ENCODE measurements at regions of chr12 and their contacts with region 1.

Region 1: DNA sequence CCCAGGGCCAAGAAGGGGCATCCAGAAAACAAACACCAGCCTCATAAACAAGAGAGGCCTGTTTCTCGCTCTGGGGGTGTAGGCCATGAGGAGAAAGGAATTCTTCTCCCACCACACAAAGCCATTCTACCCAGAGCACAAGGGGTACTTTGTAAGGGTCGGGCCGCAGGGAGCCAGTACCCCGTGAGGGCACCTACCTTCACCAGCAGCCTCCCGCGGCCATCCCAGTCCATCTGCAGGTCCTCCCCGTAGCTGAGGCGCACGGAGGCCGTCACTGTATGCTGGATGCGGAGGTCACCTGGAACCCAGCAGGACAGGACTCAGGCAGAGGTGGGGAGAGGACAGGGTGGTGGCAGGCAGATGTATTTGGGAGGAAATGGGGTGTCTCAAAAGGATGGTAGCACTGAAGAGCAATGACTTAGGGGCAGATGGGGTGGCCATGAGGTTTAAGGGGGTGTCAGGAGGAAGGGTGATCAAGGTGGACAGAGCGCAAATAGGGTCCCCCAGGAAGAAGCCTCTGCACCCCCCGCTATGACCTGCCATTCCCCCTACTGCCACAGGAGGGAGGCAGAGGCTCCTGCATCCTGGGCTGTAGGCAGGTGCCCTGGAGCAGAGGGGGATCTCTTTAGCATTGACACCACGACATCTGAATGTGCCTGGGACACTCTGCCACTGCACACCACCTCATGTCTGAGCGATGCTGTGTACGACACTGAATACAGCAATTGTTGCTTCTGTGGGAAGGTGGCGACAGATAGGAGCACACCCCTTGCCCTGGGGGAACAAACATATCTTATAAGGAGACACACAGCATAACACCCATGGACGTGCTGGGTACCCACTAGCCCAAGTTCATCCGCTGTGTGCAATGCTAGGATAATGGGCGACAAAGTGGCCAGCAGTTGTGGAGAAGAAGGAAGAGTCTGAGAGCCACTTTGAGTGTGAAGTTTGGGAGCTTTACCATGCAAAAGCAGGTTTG is 61.4 kb downstream of the VWF start:
- DNase-seq: no peak
- H3K4me3 ChIP-seq: no peak overlapping the region
- H3K27ac ChIP-seq: no peak overlapping the region
- H3K4me1 ChIP-seq: no peaks in the 10 kb centered on the region
- H3K27me3 ChIP-seq: no peaks in the 10 kb centered on the region
- CTCF ChIP-seq: peak; percentile 87 to 90

Region 2: DNA sequence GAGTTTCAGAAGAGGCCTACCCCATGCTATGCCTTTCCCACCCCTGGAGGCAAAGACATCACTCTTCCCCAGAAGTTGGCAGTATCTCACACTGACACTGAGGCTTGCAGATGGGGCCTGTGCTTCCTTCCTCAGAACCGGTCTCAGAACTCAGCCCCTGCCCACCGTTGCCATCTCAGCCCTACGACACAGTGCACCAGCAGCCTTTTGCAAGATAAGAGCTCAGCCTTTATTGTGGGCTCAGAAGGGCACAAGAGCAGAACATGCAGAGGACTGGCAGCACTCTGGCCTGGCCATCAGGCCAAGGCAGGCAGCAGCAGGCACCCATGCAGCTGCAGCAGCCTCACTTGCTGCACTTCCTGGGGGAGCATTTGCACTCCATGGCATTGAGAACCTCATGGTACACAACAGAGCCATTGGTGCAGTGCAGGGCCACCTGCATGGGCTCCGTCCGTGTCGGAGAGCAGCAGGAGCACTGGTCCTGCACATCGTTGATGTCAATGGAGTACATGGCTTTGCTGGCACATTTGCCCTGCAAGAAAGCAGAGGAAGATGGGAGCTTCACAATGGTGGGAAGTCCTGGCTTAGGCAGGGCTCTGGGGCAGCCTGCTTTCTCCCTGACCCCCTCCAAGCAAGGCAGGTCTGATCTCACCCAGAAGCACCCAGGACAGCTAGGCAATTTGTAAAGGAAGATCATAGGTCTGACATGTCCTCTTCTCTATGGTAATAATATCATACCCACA is 114.2 kb before region 1 on chr12:
- intact Hi-C with region 1: no loop called
- DNase-seq: no peak
- H3K4me3 ChIP-seq: no peak overlapping the region
- H3K27ac ChIP-seq: no peak overlapping the region
- H3K4me1 ChIP-seq: peaks cover 0 to 15% (median 7%) of the 10 kb centered on the region in 4 donors
- H3K27me3 ChIP-seq: peaks cover 0 to 60% of the 10 kb centered on the region in 2 donors
- CTCF ChIP-seq: no peak

Region 3: DNA sequence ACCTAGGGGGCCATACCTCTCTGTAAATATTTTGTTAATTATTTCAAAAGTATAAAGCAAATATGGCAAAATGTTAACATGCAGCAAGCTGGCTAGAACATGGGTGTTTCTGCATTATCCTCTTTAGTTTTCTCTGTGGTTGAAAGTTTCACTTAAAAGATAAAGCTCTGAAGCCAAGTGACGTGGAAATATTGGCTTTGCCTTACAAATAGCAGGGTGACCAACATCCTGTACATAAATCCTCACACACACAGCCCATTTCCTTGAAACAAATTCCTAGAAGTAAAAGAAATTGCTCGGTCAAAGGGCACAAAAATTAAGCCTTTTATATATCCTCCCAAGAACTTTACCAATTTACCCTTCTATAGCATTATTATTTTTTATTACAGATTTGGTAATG is 72.0 kb after region 1 on chr12:
- intact Hi-C with region 1: no loop called
- DNase-seq: no peak
- H3K4me3 ChIP-seq: no peak overlapping the region
- H3K27ac ChIP-seq: no peak overlapping the region
- H3K4me1 ChIP-seq: no peaks in the 10 kb centered on the region
- H3K27me3 ChIP-seq: no peaks in the 10 kb centered on the region
- CTCF ChIP-seq: no peak

Region 4: GRCh38 chr12:6285063-6285477 is 222.0 kb after region 1 on chr12:
- intact Hi-C with region 1: loop called (anchors 2 kb)
- DNase-seq: peak in 1 of 2 donors; percentile 45
- H3K4me3 ChIP-seq: no peak overlapping the region
- H3K27ac ChIP-seq: no peak overlapping the region
- H3K4me1 ChIP-seq: peaks cover 0 to 16% (median 9%) of the 10 kb centered on the region in 4 donors
- H3K27me3 ChIP-seq: no peaks in the 10 kb centered on the region
- CTCF ChIP-seq: peak; percentile 93 to 94